HCT116 (cell line): ENCODE measurements at regions of chr3 and their contacts with region 1.

Region 1: GRCh38 chr3:182258538-182259177 is 534.6 kb upstream of the ATP11B start:
- DNase-seq: peak; percentile 31
- ATAC-seq: peak; percentile 73
- H3K4me3 ChIP-seq: no peak overlapping the region
- H3K27ac ChIP-seq: no peak overlapping the region
- H3K4me1 ChIP-seq: no peaks in the 10 kb centered on the region
- H3K27me3 ChIP-seq: no peaks in the 10 kb centered on the region
- CTCF ChIP-seq: peak; percentile 60 to 72 (median 68); a peak in 5 of 6 replicates
- POLR2A ChIP-seq: no peak
- RAD21 ChIP-seq: peak; percentile 93

Region 2: DNA sequence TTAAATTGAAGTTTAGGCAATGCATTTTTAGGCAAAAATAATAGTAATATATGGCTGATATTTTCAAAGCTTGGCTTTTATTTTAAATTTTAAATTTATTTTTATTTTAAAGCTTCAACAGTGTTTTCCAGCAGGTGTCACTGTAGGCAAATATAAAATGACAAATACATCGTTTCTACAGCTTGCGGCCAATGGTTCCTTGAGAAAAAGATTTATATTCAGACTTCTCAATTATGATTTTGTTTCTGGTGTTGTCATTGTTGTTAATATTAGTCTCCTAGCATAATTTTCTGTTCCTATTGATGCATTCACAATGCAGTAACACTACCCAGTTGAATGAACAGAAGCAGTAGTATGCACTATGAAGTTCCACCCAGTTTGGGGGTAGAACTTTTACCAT is 1048.4 kb before region 1 on chr3:
- CTCF ChIA-PET with region 1: no interaction called
- POLR2A ChIA-PET with region 1: no interaction called
- RAD21 ChIA-PET with region 1: no interaction called
- intact Hi-C with region 1: loop called (anchors 10 kb)
- DNase-seq: peak; percentile 12
- ATAC-seq: no peak
- H3K4me3 ChIP-seq: no peak overlapping the region
- H3K27ac ChIP-seq: no peak overlapping the region
- H3K4me1 ChIP-seq: no peaks in the 10 kb centered on the region
- H3K27me3 ChIP-seq: peaks cover 33% of the 10 kb centered on the region
- CTCF ChIP-seq: peak in 2 of 3 experiments; percentile 35 to 38; a peak in 4 of 6 replicates
- POLR2A ChIP-seq: no peak
- RAD21 ChIP-seq: peak; percentile 54

Region 3: GRCh38 chr3:181326637-181327223 is 931.9 kb before region 1 on chr3:
- CTCF ChIA-PET with region 1: no interaction called
- POLR2A ChIA-PET with region 1: no interaction called
- RAD21 ChIA-PET with region 1: no interaction called
- intact Hi-C with region 1: loop called (anchors 10 kb)
- DNase-seq: peak; percentile 15
- ATAC-seq: peak; percentile 73; the same call in 1 of the 2 replicates
- H3K4me3 ChIP-seq: no peak overlapping the region
- H3K27ac ChIP-seq: no peak overlapping the region
- H3K4me1 ChIP-seq: no peaks in the 10 kb centered on the region
- H3K27me3 ChIP-seq: peaks cover 20% of the 10 kb centered on the region
- CTCF ChIP-seq: peak; percentile 34 to 75 (median 66); a peak in 5 of 6 replicates
- POLR2A ChIP-seq: no peak
- RAD21 ChIP-seq: peak; percentile 60

Region 4: DNA sequence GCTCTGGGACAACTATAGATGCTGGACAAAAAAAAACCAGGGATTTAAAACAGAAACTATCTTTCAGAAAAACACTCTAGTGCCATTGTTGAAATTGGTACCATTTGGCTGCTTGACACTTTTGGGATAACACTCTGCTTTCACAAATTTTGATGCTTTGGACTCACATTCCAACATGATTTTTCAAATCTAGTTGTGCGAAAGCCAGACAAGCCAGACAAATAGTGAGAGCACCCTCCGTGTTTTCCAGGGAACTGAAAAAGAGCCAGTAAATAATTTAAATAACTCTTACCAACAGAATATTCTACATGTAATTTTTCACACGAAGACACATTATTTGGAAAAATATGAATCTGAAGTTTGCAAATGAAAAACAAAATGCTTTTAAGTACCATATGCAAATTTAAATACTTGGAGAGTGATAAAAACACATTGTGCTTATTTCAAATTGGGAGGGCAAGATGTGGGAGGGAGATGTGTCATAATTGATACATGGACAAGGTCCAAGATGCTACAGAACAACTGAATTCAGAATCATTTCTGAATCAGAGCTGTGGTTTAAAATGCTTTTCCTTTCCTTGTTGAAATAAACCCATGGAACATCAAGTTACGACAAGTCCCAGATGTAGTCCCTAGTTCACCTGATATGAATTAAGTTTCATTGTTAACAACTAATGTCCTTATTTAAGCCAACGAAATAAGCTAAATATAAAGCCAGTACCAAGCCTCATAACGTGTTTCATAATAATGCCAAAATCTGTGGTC is 691.2 kb before region 1 on chr3:
- CTCF ChIA-PET with region 1: no interaction called
- POLR2A ChIA-PET with region 1: no interaction called
- RAD21 ChIA-PET with region 1: no interaction called
- intact Hi-C with region 1: loop called (anchors 10 kb)
- DNase-seq: no peak
- ATAC-seq: no peak
- H3K4me3 ChIP-seq: no peak overlapping the region
- H3K27ac ChIP-seq: no peak overlapping the region
- H3K4me1 ChIP-seq: no peaks in the 10 kb centered on the region
- H3K27me3 ChIP-seq: peaks cover 64% of the 10 kb centered on the region
- CTCF ChIP-seq: no peak
- POLR2A ChIP-seq: no peak
- RAD21 ChIP-seq: no peak

Region 5: GRCh38 chr3:181709537-181710279 is 549.0 kb before region 1 on chr3:
- CTCF ChIA-PET with region 1: no interaction called
- POLR2A ChIA-PET with region 1: no interaction called
- RAD21 ChIA-PET with region 1: no interaction called
- intact Hi-C with region 1: loop called (anchors 1 kb)
- DNase-seq: peak; percentile 29
- ATAC-seq: peak; percentile 60
- H3K4me3 ChIP-seq: peak overlapping the region; percentile 21 to 26
- H3K27ac ChIP-seq: no peak overlapping the region
- H3K4me1 ChIP-seq: peaks cover 11 to 16% of the 10 kb centered on the region in 2 experiments; a peak in 2 of 4 replicates
- H3K27me3 ChIP-seq: no peaks in the 10 kb centered on the region
- CTCF ChIP-seq: peak; percentile 49 to 78 (median 75)
- POLR2A ChIP-seq: no peak
- RAD21 ChIP-seq: peak; percentile 89

Region 6: DNA sequence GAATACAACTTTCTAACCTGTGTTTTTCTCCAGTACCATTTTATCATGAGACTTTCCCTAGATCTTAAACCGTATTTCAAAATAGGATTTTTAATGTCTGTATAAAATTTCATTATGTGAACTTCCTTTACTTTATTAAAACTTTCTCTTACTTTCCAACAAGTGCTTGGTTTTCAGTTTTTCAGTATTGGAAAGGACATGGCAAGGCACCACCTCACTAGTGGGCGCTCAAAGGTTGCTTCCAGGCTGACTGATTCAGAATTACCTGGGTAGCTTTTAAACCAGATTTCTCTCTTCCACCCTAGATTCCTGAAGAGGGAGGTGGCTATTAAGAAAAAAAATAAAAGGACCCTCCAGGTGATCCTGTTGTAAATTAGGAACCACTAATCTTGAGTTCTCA is 310.4 kb before region 1 on chr3:
- CTCF ChIA-PET with region 1: no interaction called
- POLR2A ChIA-PET with region 1: no interaction called
- RAD21 ChIA-PET with region 1: no interaction called
- intact Hi-C with region 1: loop called (anchors 2 kb)
- DNase-seq: no peak
- ATAC-seq: peak; percentile 72; the same call in 1 of the 2 replicates
- H3K4me3 ChIP-seq: no peak overlapping the region
- H3K27ac ChIP-seq: no peak overlapping the region
- H3K4me1 ChIP-seq: no peaks in the 10 kb centered on the region
- H3K27me3 ChIP-seq: no peaks in the 10 kb centered on the region
- CTCF ChIP-seq: peak; percentile 47 to 61 (median 53); a peak in 5 of 6 replicates
- POLR2A ChIP-seq: no peak
- RAD21 ChIP-seq: peak; percentile 73

Region 7: GRCh38 chr3:182005701-182006100 is 253.0 kb before region 1 on chr3:
- CTCF ChIA-PET with region 1: no interaction called
- POLR2A ChIA-PET with region 1: no interaction called
- RAD21 ChIA-PET with region 1: no interaction called
- intact Hi-C with region 1: no loop called
- DNase-seq: no peak
- ATAC-seq: no peak
- H3K4me3 ChIP-seq: no peak overlapping the region
- H3K27ac ChIP-seq: no peak overlapping the region
- H3K4me1 ChIP-seq: no peaks in the 10 kb centered on the region
- H3K27me3 ChIP-seq: no peaks in the 10 kb centered on the region
- CTCF ChIP-seq: no peak
- POLR2A ChIP-seq: no peak
- RAD21 ChIP-seq: no peak

Region 8: DNA sequence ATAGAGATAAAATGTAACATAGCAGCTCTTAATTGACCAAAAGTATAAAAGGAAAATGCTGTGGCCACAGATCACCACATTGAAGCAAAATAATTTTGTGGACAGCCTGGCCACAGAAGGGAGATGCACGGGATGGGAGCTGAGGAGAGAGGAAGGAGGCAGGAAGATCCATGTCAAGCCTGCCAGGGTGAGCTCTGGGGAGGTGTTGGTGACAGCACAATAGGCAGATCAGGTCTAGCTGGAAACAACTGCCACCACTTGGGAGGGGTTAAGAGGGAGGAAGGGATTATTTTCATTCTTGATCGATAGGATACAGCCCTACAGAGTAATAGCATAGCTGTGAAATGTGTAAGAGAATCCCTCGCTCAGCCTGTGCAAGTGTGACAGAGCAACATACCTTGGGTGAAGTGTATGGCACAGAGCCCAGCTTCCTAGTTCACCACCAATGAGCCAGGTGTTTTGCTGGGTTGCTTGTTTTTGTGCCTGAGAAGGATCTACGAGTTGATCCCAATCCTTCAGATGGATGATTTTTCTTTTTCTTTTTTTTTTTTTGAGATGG is 730.8 kb after region 1 on chr3:
- CTCF ChIA-PET with region 1: no interaction called
- POLR2A ChIA-PET with region 1: no interaction called
- RAD21 ChIA-PET with region 1: no interaction called
- intact Hi-C with region 1: no loop called
- DNase-seq: no peak
- ATAC-seq: no peak
- H3K4me3 ChIP-seq: no peak overlapping the region
- H3K27ac ChIP-seq: no peak overlapping the region
- H3K4me1 ChIP-seq: no peaks in the 10 kb centered on the region
- H3K27me3 ChIP-seq: no peaks in the 10 kb centered on the region
- CTCF ChIP-seq: no peak
- POLR2A ChIP-seq: no peak
- RAD21 ChIP-seq: no peak